ENCODE measurements at regions of chr12 and their contacts with region 1.

Region 1: GRCh38 chr12:65192963-65193516 is 23.7 kb downstream of the LEMD3 start:
- DNase-seq: no peak
- ATAC-seq: peak; percentile 14
- H3K4me3 ChIP-seq: no peak overlapping the region
- H3K4me3 Mint-ChIP-seq: peak overlapping the region in 8 of 10 donors; percentile 12 to 71 (median 54)
- H3K27ac ChIP-seq: no peak overlapping the region
- H3K27ac Mint-ChIP-seq: peak overlapping the region in 8 of 9 donors; percentile 0 to 83 (median 24)
- H3K4me1 ChIP-seq: peaks cover 0 to 13% of the 10 kb centered on the region in 2 donors
- H3K4me1 Mint-ChIP-seq: peaks cover 42 to 93% (median 81%) of the 10 kb centered on the region in 7 donors
- H3K27me3 ChIP-seq: no peaks in the 10 kb centered on the region
- H3K27me3 Mint-ChIP-seq: no peaks in the 10 kb centered on the region

Region 2: GRCh38 chr12:65123435-65124063 is 69.5 kb before region 1 on chr12:
- CTCF ChIA-PET with region 1: no interaction called
- POLR2A ChIA-PET with region 1: no interaction called
- intact Hi-C with region 1: no loop called
- DNase-seq: peak in 1 of 9 donors; percentile 8
- ATAC-seq: no peak
- H3K4me3 ChIP-seq: no peak overlapping the region
- H3K4me3 Mint-ChIP-seq: no peak overlapping the region
- H3K27ac ChIP-seq: no peak overlapping the region
- H3K27ac Mint-ChIP-seq: no peak overlapping the region
- H3K4me1 ChIP-seq: no peaks in the 10 kb centered on the region
- H3K4me1 Mint-ChIP-seq: peaks cover 0 to 12% (median 8%) of the 10 kb centered on the region in 7 donors
- H3K27me3 ChIP-seq: peaks cover 0 to 6% of the 10 kb centered on the region in 2 donors
- H3K27me3 Mint-ChIP-seq: peaks cover 31 to 44% (median 38%) of the 10 kb centered on the region in 5 donors

Region 3: DNA sequence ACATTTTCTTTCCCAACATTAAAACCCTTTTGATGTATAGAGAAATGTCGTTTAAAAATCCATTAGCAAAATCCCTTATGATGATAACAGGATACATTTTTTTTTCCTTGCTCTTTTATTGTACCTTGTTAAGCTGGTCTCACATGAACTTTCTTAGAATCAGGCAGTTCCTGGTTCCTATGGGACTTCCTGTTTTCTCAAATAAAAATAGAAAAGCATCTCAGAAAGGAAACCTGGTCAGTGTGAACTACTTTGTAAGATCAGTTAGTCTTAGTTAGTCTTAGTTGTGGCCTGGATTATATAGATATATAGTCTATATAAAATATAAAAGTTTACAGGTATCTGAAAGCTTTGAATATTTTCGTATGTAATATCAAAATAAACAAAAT is 16.6 kb after region 1 on chr12:
- CTCF ChIA-PET with region 1: interaction called, 3 read pairs
- POLR2A ChIA-PET with region 1: no interaction called
- intact Hi-C with region 1: loop called in 1 of 2 experiments (anchors 1 kb)
- DNase-seq: peak in 1 of 9 donors; percentile 6
- ATAC-seq: peak; percentile 52
- H3K4me3 ChIP-seq: no peak overlapping the region
- H3K4me3 Mint-ChIP-seq: peak overlapping the region; percentile 30 to 87 (median 76)
- H3K27ac ChIP-seq: no peak overlapping the region
- H3K27ac Mint-ChIP-seq: peak overlapping the region; percentile 11 to 90 (median 80)
- H3K4me1 ChIP-seq: peaks cover 15 to 21% of the 10 kb centered on the region in 2 donors
- H3K4me1 Mint-ChIP-seq: peaks cover 33 to 73% (median 54%) of the 10 kb centered on the region in 7 donors
- H3K27me3 ChIP-seq: no peaks in the 10 kb centered on the region
- H3K27me3 Mint-ChIP-seq: no peaks in the 10 kb centered on the region